ENCODE measurements at regions of chr9 and their contacts with region 1.

Region 1: GRCh38 chr9:16640649-16641048 is 229.8 kb downstream of the BNC2 start:
- DNase-seq: peak; percentile 19 to 67
- ATAC-seq: peak; percentile 96 to 100
- H3K4me3 ChIP-seq: no peak overlapping the region
- H3K27ac ChIP-seq: peak overlapping the region in 3 of 4 donors; percentile 32 to 44 (median 38)
- H3K4me1 ChIP-seq: peaks cover 7 to 10% of the 10 kb centered on the region in 2 donors
- H3K27me3 ChIP-seq: no peaks in the 10 kb centered on the region
- CTCF ChIP-seq: peak in 2 of 5 experiments; percentile 14 to 37
- POLR2A ChIP-seq: no peak

Region 2: GRCh38 chr9:16521868-16522411 is 118.7 kb before region 1 on chr9:
- in situ Hi-C with region 1: no loop called
- intact Hi-C with region 1: no loop called
- DNase-seq: no peak
- ATAC-seq: peak; percentile 61 to 63
- H3K4me3 ChIP-seq: no peak overlapping the region
- H3K27ac ChIP-seq: peak overlapping the region in 2 of 4 donors; percentile 3 to 51
- H3K4me1 ChIP-seq: peaks cover 0 to 7% of the 10 kb centered on the region in 2 donors
- H3K27me3 ChIP-seq: no peaks in the 10 kb centered on the region
- CTCF ChIP-seq: no peak
- POLR2A ChIP-seq: no peak

Region 3: DNA sequence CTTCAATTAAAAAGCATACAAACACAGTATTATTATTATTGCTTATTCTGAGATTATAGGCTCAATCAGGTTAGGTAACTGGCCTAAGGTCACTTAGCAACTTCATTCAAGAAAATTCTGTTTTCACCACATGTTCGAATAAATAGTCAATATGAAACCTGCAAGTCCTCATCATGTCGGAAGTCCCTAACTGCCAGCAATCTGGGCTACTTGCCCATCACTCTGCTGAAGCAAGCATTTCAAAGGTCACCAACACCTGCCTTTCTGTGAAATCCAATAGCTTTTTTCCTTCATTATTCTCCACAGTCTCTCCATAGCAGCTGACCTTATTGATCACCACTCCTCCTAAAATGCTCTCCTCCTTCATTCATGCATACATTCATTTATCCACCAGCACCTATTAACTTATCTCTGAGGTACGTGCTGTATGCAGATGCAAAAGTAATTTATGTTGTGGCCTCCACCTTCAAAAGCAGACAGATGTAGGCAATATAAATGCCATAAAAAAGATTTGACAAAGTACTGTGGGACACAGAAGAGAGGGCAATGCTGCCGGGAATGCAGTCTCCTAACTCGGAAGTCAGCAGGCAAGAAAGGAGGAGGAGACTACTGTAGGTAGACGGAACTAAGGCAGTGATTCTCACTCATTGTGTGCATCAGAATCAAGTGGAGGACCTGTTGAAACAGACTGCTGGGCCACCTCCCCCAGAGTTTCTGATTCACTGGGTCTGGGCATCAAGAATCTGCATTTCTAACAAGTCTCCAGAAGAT is 81.0 kb before region 1 on chr9:
- in situ Hi-C with region 1: no loop called
- intact Hi-C with region 1: no loop called
- DNase-seq: no peak
- ATAC-seq: no peak
- H3K4me3 ChIP-seq: no peak overlapping the region
- H3K27ac ChIP-seq: no peak overlapping the region
- H3K4me1 ChIP-seq: peaks cover 5 to 7% of the 10 kb centered on the region in 2 donors
- H3K27me3 ChIP-seq: no peaks in the 10 kb centered on the region
- CTCF ChIP-seq: no peak
- POLR2A ChIP-seq: no peak

Region 4: DNA sequence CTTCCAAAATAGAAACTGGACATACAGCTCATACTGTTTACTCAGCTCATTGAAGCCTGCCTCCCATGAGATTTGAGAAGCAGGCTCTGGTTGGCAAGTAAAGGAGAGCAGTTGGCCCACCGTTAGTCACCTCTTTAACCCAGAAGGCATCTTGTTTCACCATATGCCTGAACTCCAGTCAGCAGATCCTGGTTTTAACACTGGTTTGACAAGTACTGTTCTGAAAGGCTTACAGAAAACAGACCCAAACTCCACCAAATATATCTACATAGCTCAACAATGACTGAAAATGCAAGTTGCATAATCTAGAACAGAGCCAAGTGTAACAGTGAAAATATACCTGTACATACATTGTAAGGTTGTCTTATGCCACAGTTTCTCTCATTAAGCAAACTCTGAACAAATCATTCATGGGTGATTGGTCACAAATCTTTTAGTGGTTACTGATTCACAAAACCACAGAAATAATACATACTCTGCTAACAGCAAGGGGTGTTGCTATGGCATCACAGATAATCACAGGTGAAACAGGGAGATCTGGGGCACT is 31.0 kb after region 1 on chr9:
- in situ Hi-C with region 1: no loop called
- intact Hi-C with region 1: loop called (anchors 2 kb)
- DNase-seq: peak; percentile 40 to 62
- ATAC-seq: peak; percentile 95 to 99
- H3K4me3 ChIP-seq: no peak overlapping the region
- H3K27ac ChIP-seq: peak overlapping the region; percentile 49 to 76 (median 65)
- H3K4me1 ChIP-seq: peaks cover 0 to 26% of the 10 kb centered on the region in 2 donors
- H3K27me3 ChIP-seq: no peaks in the 10 kb centered on the region
- CTCF ChIP-seq: no peak
- POLR2A ChIP-seq: no peak

Region 5: DNA sequence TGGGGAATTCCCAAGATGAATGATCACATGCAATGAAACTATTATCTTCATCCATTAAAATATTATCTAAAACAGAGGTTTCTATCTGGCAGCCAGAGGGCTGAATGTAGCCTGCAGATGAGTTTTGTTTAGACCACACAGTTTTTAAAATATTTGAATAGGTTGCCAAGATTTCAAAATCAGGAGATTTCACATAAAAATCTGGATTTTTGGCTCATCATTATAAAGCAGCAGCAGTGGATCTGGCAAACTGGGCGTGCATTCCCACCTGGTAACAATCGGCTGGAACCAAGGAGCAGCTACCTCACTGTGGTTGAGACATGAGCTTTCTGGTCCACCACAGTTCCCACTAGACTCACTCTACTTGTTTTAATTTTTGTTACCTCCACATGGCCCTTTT is 74.8 kb after region 1 on chr9:
- in situ Hi-C with region 1: no loop called
- intact Hi-C with region 1: loop called (anchors 5 kb)
- DNase-seq: peak in 1 of 2 donors; percentile 36
- ATAC-seq: peak; percentile 40 to 42
- H3K4me3 ChIP-seq: no peak overlapping the region
- H3K27ac ChIP-seq: no peak overlapping the region
- H3K4me1 ChIP-seq: peaks cover 2 to 26% of the 10 kb centered on the region in 2 donors
- H3K27me3 ChIP-seq: no peaks in the 10 kb centered on the region
- CTCF ChIP-seq: no peak
- POLR2A ChIP-seq: no peak

Region 6: DNA sequence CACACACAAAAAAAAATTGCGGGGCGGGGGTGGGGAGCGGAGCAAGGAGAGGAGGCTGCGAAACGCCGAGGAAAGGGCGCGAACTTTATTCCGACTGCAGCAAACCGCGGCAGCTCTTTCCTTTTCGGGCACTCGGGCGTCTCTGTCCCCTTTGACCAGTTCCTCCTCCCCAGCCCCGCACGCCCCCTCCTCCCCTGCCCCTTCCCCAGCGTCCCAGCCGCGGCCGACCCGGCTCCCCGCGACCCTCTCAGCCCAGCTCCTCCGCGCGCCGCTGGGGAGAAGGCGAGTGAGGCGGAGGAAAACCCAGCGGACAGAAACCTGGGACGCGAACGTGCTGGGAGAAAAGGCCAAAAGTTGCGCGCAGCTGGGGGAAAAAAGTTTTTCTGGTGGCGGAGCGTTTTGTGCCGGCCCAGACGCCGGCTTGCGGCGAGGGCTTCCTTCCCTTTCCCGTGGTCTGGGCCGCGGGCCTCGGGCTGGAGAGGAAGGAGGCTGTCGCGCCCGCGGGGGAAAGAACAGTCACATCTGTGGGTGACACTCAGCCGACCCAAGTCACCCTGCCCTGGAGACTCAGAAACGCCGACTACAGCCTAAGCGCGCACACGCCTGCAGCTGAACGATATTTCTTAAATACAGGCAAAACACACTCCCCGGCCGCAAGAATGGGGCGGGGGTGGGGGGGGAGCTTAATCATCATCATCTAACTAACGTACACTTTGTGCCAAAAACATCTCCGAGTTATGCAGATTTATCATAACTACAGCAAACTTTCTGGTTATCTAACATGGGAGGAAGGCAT is 230.9 kb after region 1 on chr9:
- in situ Hi-C with region 1: no loop called
- intact Hi-C with region 1: no loop called
- DNase-seq: peak in 1 of 2 donors; percentile 35
- ATAC-seq: peak; percentile 24 to 34
- H3K4me3 ChIP-seq: peak overlapping the region; percentile 71 to 85 (median 76)
- H3K27ac ChIP-seq: peak overlapping the region; percentile 80 to 90 (median 84)
- H3K4me1 ChIP-seq: peaks cover 3 to 9% of the 10 kb centered on the region in 2 donors
- H3K27me3 ChIP-seq: peaks cover 0 to 4% (median 0%) of the 10 kb centered on the region in 3 donors
- CTCF ChIP-seq: no peak
- POLR2A ChIP-seq: peak; percentile 10 to 27